ENCODE measurements at regions of chr1 and their contacts with region 1.

Region 1: GRCh38 chr1:45803301-45803780 is at the start of gene MAST2:
- DNase-seq: peak; percentile 59 to 95
- H3K4me3 ChIP-seq: peak within 1 kb of the TSS; percentile 67
- H3K27ac ChIP-seq: peak within 1 kb of the TSS; percentile 70
- H3K4me1 ChIP-seq: peaks cover 19% of the 10 kb centered on the region
- H3K27me3 ChIP-seq: no peaks in the 10 kb centered on the region
- CTCF ChIP-seq: no peak
- total RNA-seq, gene MAST2: 58.8 and 69.3 TPM in 2 replicates

Region 2: DNA sequence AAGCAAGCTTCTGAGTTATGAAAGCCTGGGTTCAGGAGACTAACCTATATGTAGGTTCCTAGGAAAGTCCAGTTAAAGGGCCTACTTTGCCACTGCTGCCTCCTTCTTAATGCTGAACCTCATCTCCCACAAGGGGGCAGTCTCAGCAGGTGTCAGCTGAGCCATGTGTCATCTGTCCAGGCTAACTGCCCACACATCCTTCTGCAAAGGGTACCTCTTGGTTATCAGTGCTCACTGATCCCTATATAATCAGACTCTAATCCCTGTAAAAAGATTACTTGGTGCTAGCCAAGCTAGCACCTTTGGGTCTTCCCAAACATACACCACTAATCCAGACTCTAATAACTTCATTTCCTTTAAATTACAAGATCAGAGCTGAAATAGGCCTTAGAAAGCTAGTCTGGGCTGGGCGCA is 290.7 kb before region 1 on chr1:
- CTCF ChIA-PET with region 1: no interaction called
- POLR2A ChIA-PET with region 1: interaction called, 5 read pairs
- intact Hi-C with region 1: loop called (anchors 10 kb)
- DNase-seq: peak; percentile 55 to 61
- H3K4me3 ChIP-seq: no peak overlapping the region
- H3K27ac ChIP-seq: no peak overlapping the region
- H3K4me1 ChIP-seq: peaks cover 20% of the 10 kb centered on the region
- H3K27me3 ChIP-seq: no peaks in the 10 kb centered on the region
- CTCF ChIP-seq: peak; percentile 80

Region 3: GRCh38 chr1:45739137-45739536 is 64.2 kb before region 1 on chr1:
- CTCF ChIA-PET with region 1: no interaction called
- POLR2A ChIA-PET with region 1: no interaction called
- intact Hi-C with region 1: no loop called
- DNase-seq: no peak
- H3K4me3 ChIP-seq: no peak overlapping the region
- H3K27ac ChIP-seq: no peak overlapping the region
- H3K4me1 ChIP-seq: no peaks in the 10 kb centered on the region
- H3K27me3 ChIP-seq: no peaks in the 10 kb centered on the region
- CTCF ChIP-seq: no peak

Region 4: DNA sequence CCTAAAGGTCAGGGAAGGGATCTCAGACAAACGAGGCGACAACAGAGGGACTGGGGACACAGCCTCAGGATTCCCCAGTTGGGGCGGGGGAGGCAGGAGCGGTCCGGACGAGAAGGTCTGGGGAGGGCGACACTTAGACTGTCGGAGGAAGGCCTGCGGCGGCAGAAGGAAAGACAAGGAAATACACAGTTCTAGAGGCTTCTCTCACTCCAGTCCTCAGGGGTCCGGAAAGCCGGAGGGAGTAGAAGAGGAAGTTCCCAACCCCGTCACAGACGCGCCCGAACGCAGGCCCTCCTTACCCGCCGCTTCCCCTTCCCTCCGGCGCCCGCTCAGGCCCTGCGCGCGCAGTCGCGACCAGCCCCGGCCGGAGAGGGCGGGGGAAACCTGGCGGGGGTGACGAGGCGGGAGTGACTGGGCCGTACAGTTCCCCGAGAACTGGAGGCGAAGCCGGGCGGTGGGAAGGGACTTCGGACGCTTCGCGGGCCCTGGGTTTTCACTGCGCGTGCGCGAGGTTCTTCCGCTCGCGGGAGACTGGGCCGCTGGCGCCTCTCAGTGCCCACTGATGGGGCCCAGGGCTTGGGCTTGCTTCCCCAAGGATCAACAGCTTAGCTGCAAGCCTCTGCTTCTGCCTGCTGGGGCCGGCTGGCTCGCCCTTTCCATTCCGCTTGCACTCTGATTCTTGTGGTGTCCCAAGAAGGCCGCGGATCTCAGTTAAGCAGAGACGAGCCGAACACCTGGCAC is 52.9 kb before region 1 on chr1 and contains the start of gene IPP:
- CTCF ChIA-PET with region 1: interaction called, 5 read pairs
- POLR2A ChIA-PET with region 1: no interaction called
- intact Hi-C with region 1: loop called (anchors 1 kb)
- DNase-seq: peak; percentile 92 to 99
- H3K4me3 ChIP-seq: peak within 1 kb of the TSS; percentile 75
- H3K27ac ChIP-seq: peak within 1 kb of the TSS; percentile 78
- H3K4me1 ChIP-seq: peaks cover 11% of the 10 kb centered on the region
- H3K27me3 ChIP-seq: no peaks in the 10 kb centered on the region
- CTCF ChIP-seq: no peak
- total RNA-seq, gene IPP: 25.2 and 25.4 TPM in 2 replicates